Activated CD4-positive, alpha-beta T cell treated with anti-CD3 and anti-CD28 coated beads for 36 hours (primary cell): ENCODE measurements at regions of chr11 and their contacts with region 1.

Region 1: GRCh38 chr11:75351791-75352587 is 528 bp upstream of the ARRB1 start:
- DNase-seq: peak; percentile 69
- ATAC-seq: peak; percentile 59
- H3K4me3 Mint-ChIP-seq: peak overlapping the region; percentile 84
- H3K27ac Mint-ChIP-seq: peak overlapping the region; percentile 88
- H3K4me1 Mint-ChIP-seq: peaks cover 55% of the 10 kb centered on the region
- H3K27me3 Mint-ChIP-seq: no peaks in the 10 kb centered on the region

Region 2: DNA sequence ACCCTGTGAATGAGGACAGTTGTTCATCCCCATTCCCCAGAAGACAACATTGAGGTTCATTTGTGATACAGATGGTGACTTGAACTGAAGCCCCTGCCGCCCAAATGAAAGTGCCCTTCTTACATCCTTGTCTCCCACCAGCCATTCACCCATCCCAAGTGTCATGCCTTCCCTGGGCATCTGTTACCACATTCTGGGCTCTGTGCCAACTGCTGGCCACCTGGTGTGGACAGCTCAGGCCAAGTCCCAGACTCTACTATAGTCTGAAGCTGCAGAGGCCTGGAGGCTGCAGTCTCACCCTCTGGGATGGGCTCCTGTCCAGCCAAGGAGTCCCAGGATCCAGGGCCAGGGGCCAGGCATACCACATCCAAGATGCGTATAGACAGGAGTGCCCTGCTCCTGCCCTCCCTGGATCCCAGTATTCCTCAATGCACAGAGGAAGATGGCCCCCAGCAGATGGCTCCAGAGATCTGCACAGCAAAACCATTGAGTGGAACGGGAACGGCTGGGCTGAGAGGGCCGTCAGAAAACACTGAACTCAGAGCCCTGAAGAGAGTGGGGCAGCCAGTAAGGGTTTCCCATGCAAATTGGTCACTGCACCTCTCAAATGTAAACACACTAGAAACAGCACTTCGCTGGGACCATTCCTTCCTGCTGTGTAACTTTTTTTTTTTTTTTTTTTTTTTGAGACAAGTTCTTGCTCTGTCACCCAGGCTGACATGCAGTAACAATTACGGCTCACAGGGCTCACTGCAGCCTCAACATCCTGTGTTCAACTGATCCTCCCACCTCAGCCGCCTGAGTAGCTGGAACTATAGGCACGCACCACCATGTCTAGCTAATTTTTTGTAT is 23.3 kb before region 1 on chr11:
- CTCF ChIA-PET with region 1: interaction called, 8 read pairs
- POLR2A ChIA-PET with region 1: no interaction called
- intact Hi-C with region 1: loop called in 1 of 2 experiments (anchors 1 kb)
- DNase-seq: peak; percentile 77
- ATAC-seq: peak; percentile 76
- H3K4me3 Mint-ChIP-seq: no peak overlapping the region
- H3K27ac Mint-ChIP-seq: peak overlapping the region; percentile 52
- H3K4me1 Mint-ChIP-seq: peaks cover 67% of the 10 kb centered on the region
- H3K27me3 Mint-ChIP-seq: no peaks in the 10 kb centered on the region

Region 3: GRCh38 chr11:75340050-75340409 is 12.0 kb before region 1 on chr11:
- CTCF ChIA-PET with region 1: interaction called, 21 read pairs
- POLR2A ChIA-PET with region 1: interaction called, 4 read pairs
- intact Hi-C with region 1: no loop called
- DNase-seq: no peak
- ATAC-seq: peak; percentile 6
- H3K4me3 Mint-ChIP-seq: no peak overlapping the region
- H3K27ac Mint-ChIP-seq: peak overlapping the region; percentile 83
- H3K4me1 Mint-ChIP-seq: peaks cover 95% of the 10 kb centered on the region
- H3K27me3 Mint-ChIP-seq: no peaks in the 10 kb centered on the region

Region 4: GRCh38 chr11:75399344-75400145 is 47.6 kb after region 1 on chr11 and contains the start of gene RPS3:
- CTCF ChIA-PET with region 1: no interaction called
- POLR2A ChIA-PET with region 1: no interaction called
- intact Hi-C with region 1: loop called in 1 of 2 experiments (anchors 1 kb)
- DNase-seq: peak; percentile 94
- ATAC-seq: peak; percentile 92
- H3K4me3 Mint-ChIP-seq: peak within 1 kb of the TSS; percentile 96
- H3K27ac Mint-ChIP-seq: peak within 1 kb of the TSS; percentile 98
- H3K4me1 Mint-ChIP-seq: peaks cover 41% of the 10 kb centered on the region
- H3K27me3 Mint-ChIP-seq: no peaks in the 10 kb centered on the region
- total RNA-seq, gene RPS3: 4,536 to 4,569 TPM